ENCODE measurements at regions of chr2 and their contacts with region 1.

Region 1: DNA sequence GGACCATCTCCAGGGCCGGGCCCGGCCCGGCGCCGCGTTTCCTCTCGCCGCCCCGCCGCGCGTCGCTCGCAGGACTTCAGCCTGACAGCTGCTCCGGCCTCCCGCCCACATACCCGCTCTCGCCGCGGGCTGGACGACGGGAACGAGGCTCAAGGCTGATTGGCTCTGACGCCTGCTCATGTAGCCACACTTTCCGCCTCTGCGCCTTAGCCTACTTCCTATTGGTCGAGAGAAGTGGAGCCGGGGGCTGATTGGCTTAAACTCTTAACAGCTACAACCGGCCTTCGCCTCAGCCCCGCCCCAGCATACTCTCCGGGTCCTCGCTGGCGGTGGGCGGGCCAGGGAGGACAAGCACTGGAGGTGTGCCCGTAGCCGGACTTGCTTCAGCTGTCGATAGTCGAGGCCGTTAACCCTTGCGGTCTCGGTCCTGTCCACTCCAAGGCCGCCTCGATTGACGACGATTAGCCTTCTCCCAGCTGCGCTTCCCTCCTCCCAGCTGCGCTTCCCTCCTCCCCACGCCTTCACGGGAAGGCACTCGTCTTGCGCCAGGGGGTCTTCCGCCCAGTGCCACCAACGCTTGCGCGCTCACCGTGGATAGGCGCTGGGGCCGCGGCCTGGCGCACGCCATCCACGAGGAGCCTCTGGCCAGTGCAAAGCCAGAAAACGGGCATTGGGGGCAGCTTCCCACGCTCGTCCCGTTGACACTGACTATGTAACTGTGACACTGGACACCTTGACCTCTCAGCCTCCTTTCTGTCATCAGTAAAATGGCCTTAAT is at the start of gene PRADC1:
- DNase-seq: peak; percentile 97 to 99 (median 98)
- H3K4me3 ChIP-seq: peak within 1 kb of the TSS; percentile 66 to 84 (median 76)
- H3K4me3 Mint-ChIP-seq: peak within 1 kb of the TSS; percentile 89 to 95
- H3K27ac ChIP-seq: peak within 1 kb of the TSS; percentile 73 to 87
- H3K27ac Mint-ChIP-seq: peak within 1 kb of the TSS; percentile 83 to 94 (median 94)
- H3K4me1 ChIP-seq: peaks cover 24 to 35% of the 10 kb centered on the region in 2 donors
- H3K4me1 Mint-ChIP-seq: peaks cover 26% of the 10 kb centered on the region
- H3K27me3 ChIP-seq: no peaks in the 10 kb centered on the region
- H3K27me3 Mint-ChIP-seq: peaks cover 0 to 1% (median 0%) of the 10 kb centered on the region in 3 donors
- CTCF ChIP-seq: no peak
- polyA plus RNA-seq, gene PRADC1: 9.0 to 49.2 (median 33.3) TPM

Region 2: GRCh38 chr2:72780477-72780876 is 452.9 kb before region 1 on chr2:
- intact Hi-C with region 1: no loop called
- DNase-seq: no peak
- H3K4me3 ChIP-seq: no peak overlapping the region
- H3K4me3 Mint-ChIP-seq: no peak overlapping the region
- H3K27ac ChIP-seq: no peak overlapping the region
- H3K27ac Mint-ChIP-seq: no peak overlapping the region
- H3K4me1 ChIP-seq: no peaks in the 10 kb centered on the region
- H3K4me1 Mint-ChIP-seq: no peaks in the 10 kb centered on the region
- H3K27me3 ChIP-seq: no peaks in the 10 kb centered on the region
- H3K27me3 Mint-ChIP-seq: peaks cover 0 to 2% (median 0%) of the 10 kb centered on the region in 3 donors
- CTCF ChIP-seq: no peak

Region 3: DNA sequence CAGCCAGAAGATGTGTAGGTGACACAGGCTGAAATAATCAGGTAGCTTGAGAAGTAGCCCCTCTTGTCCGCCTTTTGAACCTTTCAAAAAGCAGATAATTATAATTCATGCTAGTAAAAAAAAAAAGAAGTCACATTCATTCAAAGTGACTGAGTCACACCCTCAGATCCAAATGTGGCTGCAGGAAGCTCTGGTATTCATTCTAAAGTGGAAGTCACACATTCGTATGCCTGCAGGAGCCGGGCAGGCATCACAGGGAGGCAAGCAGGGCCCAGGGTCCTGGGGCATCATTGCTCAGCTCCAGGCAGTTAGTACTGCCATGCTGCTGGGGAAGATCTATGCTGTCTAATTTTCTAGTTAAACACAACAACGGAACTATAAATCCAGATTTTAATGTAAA is 98.9 kb before region 1 on chr2:
- intact Hi-C with region 1: no loop called
- DNase-seq: no peak
- H3K4me3 ChIP-seq: no peak overlapping the region
- H3K4me3 Mint-ChIP-seq: no peak overlapping the region
- H3K27ac ChIP-seq: no peak overlapping the region
- H3K27ac Mint-ChIP-seq: no peak overlapping the region
- H3K4me1 ChIP-seq: no peaks in the 10 kb centered on the region
- H3K4me1 Mint-ChIP-seq: peaks cover 7% of the 10 kb centered on the region
- H3K27me3 ChIP-seq: peaks cover 0 to 3% of the 10 kb centered on the region in 2 donors
- H3K27me3 Mint-ChIP-seq: peaks cover 9 to 15% (median 11%) of the 10 kb centered on the region in 3 donors
- CTCF ChIP-seq: no peak

Region 4: GRCh38 chr2:73385595-73386341 is 152.4 kb after region 1 on chr2 and contains the start of gene ALMS1:
- intact Hi-C with region 1: loop called in 1 of 2 experiments (anchors 10 kb)
- DNase-seq: peak; percentile 86 to 89 (median 88)
- H3K4me3 ChIP-seq: peak within 1 kb of the TSS; percentile 76 to 94 (median 85)
- H3K4me3 Mint-ChIP-seq: peak within 1 kb of the TSS; percentile 86 to 91
- H3K27ac ChIP-seq: peak within 1 kb of the TSS; percentile 39 to 73
- H3K27ac Mint-ChIP-seq: peak within 1 kb of the TSS; percentile 69 to 94 (median 89)
- H3K4me1 ChIP-seq: peaks cover 15 to 19% of the 10 kb centered on the region in 2 donors
- H3K4me1 Mint-ChIP-seq: peaks cover 19% of the 10 kb centered on the region
- H3K27me3 ChIP-seq: peaks cover 10 to 22% of the 10 kb centered on the region in 2 donors
- H3K27me3 Mint-ChIP-seq: peaks cover 2 to 22% (median 11%) of the 10 kb centered on the region in 3 donors
- CTCF ChIP-seq: no peak
- polyA plus RNA-seq, gene ALMS1: 0.55 to 5.2 (median 0.64) TPM

Region 5: GRCh38 chr2:73736855-73737779 is 503.8 kb after region 1 on chr2 and contains the start of gene TPRKB:
- intact Hi-C with region 1: loop called in 1 of 2 experiments (anchors 5 kb)
- DNase-seq: peak; percentile 94 to 96 (median 95)
- H3K4me3 ChIP-seq: peak within 1 kb of the TSS; percentile 61 to 97 (median 83)
- H3K4me3 Mint-ChIP-seq: peak within 1 kb of the TSS; percentile 96 to 98
- H3K27ac ChIP-seq: peak within 1 kb of the TSS; percentile 4 to 79
- H3K27ac Mint-ChIP-seq: peak within 1 kb of the TSS; percentile 65 to 92 (median 90)
- H3K4me1 ChIP-seq: peaks cover 10 to 14% of the 10 kb centered on the region in 2 donors
- H3K4me1 Mint-ChIP-seq: peaks cover 17% of the 10 kb centered on the region
- H3K27me3 ChIP-seq: no peaks in the 10 kb centered on the region
- H3K27me3 Mint-ChIP-seq: peaks cover 0 to 5% (median 5%) of the 10 kb centered on the region in 3 donors
- CTCF ChIP-seq: no peak
- polyA plus RNA-seq, gene TPRKB: 26.9 to 69.1 (median 65.8) TPM

Measured in CD14-positive monocyte (primary cell).